H1 (cell line): ENCODE measurements at regions of chr20 and their contacts with region 1.

Region 1: DNA sequence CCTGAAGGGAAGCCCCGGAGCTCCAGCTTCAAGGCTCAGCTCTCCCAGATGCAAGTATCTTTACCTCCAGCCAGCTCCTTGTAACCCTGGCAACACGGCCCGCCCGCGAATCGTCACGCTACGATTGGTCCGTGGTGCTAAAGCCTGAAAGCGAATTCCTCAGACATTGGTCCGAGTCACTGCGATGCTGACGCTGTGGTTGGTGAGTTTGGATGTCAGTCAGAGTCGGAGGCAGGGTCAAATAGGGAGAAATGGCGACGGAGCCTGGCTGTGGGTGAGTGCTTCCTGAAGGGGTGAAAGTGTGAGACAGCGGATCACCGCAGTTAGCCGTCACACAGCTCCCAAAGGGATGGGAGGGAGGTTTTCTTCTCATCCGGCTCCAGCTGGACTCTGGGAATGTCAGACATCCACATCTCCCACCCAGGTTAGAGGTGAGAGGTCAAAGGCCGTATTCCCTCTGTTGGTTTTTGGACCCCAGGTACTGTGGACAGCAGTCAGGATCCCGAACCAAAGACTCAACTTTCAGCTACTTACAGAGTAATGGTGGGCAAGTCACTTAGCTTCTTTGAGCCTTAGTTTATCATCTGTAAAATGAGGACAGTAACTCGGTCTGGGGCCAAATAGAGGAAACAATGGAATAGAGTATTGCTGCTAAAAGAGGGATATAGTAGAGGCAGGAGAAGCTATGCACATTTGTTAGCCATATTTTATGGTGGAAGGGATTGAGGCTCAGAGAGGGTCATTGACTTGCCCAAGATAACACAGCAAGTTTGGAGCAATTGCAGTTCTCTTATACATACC is at the start of gene ZSWIM1:
- DNase-seq: peak; percentile 98 to 99
- H3K4me3 ChIP-seq: peak within 1 kb of the TSS; percentile 80 to 99 (median 90)
- H3K27ac ChIP-seq: peak within 1 kb of the TSS; percentile 69
- H3K4me1 ChIP-seq: no peaks in the 10 kb centered on the region
- H3K27me3 ChIP-seq: no peaks in the 10 kb centered on the region
- CTCF ChIP-seq: no peak
- EP300 ChIP-seq: no peak
- POLR2A ChIP-seq: peak; percentile 61 to 88
- RAD21 ChIP-seq: no peak
- total RNA-seq, gene ZSWIM1: 15.6 and 16.7 TPM in 2 replicates

Region 2: DNA sequence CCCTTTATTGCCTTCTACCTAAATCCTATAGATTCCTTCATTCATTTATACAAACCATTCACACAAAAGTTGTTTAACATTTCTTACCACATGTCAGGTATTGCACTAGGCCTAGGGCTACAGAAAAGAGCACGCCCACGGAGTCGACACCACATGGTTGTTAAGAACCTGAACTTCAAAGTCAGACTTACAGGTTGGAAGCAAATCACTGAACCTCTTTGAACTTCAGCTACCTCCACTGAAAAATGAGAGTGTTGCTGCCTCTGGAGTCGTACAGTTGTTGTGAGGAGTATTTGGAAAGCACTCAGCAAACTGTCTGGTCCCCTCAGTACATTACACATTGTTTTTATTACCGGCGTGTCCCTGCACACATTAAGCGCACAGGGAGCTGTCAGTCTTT is 623.5 kb before region 1 on chr20:
- CTCF ChIA-PET with region 1: no interaction called
- POLR2A ChIA-PET with region 1: no interaction called
- DNase-seq: no peak
- H3K4me3 ChIP-seq: no peak overlapping the region
- H3K27ac ChIP-seq: no peak overlapping the region
- H3K4me1 ChIP-seq: peaks cover 0 to 6% (median 3%) of the 10 kb centered on the region in 4 experiments; a peak in 5 of 7 replicates
- H3K27me3 ChIP-seq: no peaks in the 10 kb centered on the region; a peak in 1 of 7 replicates
- CTCF ChIP-seq: no peak
- EP300 ChIP-seq: no peak
- POLR2A ChIP-seq: no peak
- RAD21 ChIP-seq: no peak

Region 3: DNA sequence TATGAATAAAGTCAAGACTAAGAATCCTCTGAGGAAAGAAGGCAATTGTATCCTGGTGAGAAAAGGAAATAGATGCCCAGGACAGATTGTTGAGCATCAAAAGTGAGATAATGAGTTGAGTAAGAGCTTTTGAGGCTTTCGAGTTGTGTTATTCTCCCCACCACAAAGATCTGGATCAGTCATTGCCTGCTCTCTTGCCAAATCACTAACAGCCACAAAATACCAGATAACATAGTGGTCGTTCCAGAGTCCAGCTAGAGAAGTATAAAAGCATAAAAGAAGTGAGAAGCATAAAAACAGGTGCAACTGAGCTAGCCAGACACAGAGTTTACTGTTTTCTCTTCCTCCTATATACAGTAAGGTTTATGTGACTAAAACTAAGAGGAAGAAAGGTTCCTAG is 154.1 kb before region 1 on chr20:
- CTCF ChIA-PET with region 1: no interaction called
- POLR2A ChIA-PET with region 1: no interaction called
- DNase-seq: no peak
- H3K4me3 ChIP-seq: no peak overlapping the region
- H3K27ac ChIP-seq: no peak overlapping the region
- H3K4me1 ChIP-seq: no peaks in the 10 kb centered on the region
- H3K27me3 ChIP-seq: no peaks in the 10 kb centered on the region
- CTCF ChIP-seq: no peak
- EP300 ChIP-seq: no peak
- POLR2A ChIP-seq: no peak
- RAD21 ChIP-seq: no peak

Region 4: DNA sequence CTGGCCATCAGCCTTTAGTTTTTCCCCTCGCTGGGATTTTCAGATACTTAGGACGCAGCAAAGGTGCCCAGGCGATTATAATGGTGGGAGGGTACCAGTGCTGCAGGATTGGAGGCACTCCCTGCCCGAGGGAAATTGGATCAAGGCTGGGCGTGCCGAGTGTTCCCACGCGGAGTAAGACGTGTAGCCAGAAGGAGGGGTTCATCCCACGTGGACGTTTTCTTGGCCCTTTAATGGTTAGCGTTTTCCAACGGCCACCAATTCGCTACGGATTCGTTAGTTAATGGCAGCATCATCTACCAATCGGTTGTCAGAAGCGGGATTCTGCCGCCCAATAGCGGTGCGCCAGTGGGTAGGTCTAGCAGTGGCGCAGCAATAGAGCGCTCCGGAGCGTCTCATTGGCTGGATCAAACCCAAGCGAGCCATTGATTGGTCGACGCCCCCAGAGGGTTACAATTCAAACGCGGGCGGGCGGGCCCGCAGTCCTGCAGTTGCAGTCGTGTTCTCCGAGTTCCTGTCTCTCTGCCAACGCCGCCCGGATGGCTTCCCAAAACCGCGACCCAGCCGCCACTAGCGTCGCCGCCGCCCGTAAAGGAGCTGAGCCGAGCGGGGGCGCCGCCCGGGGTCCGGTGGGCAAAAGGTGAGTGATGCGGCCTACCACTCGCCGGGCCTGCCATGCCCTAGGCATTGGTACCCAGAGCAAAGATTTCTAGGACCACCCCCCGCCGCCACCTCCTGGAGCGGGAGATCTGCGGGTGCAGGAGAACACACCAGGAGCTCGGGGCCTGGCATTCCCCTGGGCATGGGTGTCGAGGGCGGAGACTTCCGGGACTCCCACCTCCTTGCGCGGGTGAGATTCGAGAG is 68.8 kb before region 1 on chr20 and contains the start of gene UBE2C:
- CTCF ChIA-PET with region 1: no interaction called
- POLR2A ChIA-PET with region 1: interaction called, 15 read pairs
- DNase-seq: peak; percentile 96 to 99
- H3K4me3 ChIP-seq: peak within 1 kb of the TSS; percentile 91 to 100 (median 98)
- H3K27ac ChIP-seq: peak within 1 kb of the TSS; percentile 74; the same call in 1 of the 2 replicates
- H3K4me1 ChIP-seq: peaks cover 0 to 4% (median 2%) of the 10 kb centered on the region in 4 experiments; a peak in 3 of 7 replicates
- H3K27me3 ChIP-seq: no peaks in the 10 kb centered on the region
- CTCF ChIP-seq: no peak
- EP300 ChIP-seq: no peak
- POLR2A ChIP-seq: peak; percentile 47 to 64; a peak in 2 of 3 replicates
- RAD21 ChIP-seq: no peak
- total RNA-seq, gene UBE2C: 243 and 255 TPM in 2 replicates

Region 5: GRCh38 chr20:45848969-45849582 is 32.1 kb before region 1 on chr20:
- CTCF ChIA-PET with region 1: no interaction called
- POLR2A ChIA-PET with region 1: interaction called, 10 read pairs
- DNase-seq: no peak
- H3K4me3 ChIP-seq: no peak overlapping the region
- H3K27ac ChIP-seq: no peak overlapping the region
- H3K4me1 ChIP-seq: peaks cover 3 to 6% (median 4%) of the 10 kb centered on the region in 4 experiments; a peak in 5 of 7 replicates
- H3K27me3 ChIP-seq: no peaks in the 10 kb centered on the region
- CTCF ChIP-seq: no peak
- EP300 ChIP-seq: no peak
- POLR2A ChIP-seq: no peak
- RAD21 ChIP-seq: no peak

Region 6: DNA sequence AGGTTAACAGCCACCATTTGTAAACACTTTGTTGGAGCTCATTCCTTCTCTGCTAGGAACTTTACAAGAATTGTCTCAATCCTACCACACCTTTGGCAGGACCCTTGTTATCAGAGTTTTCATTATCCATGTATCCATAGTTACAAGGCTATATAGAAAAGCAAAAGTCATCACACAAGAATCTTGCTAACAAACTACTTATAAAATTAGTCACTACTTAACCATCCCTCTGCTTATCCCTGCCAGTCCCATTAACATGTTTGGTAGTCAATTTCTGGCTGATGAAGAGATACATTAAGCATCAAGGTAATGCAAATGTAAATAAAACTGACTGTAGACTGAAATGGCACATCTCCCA is 13.4 kb before region 1 on chr20:
- CTCF ChIA-PET with region 1: no interaction called
- POLR2A ChIA-PET with region 1: interaction called, 39 read pairs
- DNase-seq: no peak
- H3K4me3 ChIP-seq: no peak overlapping the region
- H3K27ac ChIP-seq: no peak overlapping the region
- H3K4me1 ChIP-seq: no peaks in the 10 kb centered on the region
- H3K27me3 ChIP-seq: no peaks in the 10 kb centered on the region
- CTCF ChIP-seq: no peak
- EP300 ChIP-seq: no peak
- POLR2A ChIP-seq: no peak
- RAD21 ChIP-seq: no peak

Region 7: GRCh38 chr20:45910670-45911485 is 29.7 kb after region 1 on chr20:
- CTCF ChIA-PET with region 1: interaction called, 4 read pairs
- POLR2A ChIA-PET with region 1: interaction called, 19 read pairs
- DNase-seq: peak; percentile 99 to 100
- H3K4me3 ChIP-seq: peak overlapping the region; percentile 52 to 81 (median 70)
- H3K27ac ChIP-seq: peak overlapping the region; percentile 58; the same call in 1 of the 2 replicates
- H3K4me1 ChIP-seq: peaks cover 0 to 2% (median 0%) of the 10 kb centered on the region in 4 experiments; a peak in 3 of 7 replicates
- H3K27me3 ChIP-seq: no peaks in the 10 kb centered on the region
- CTCF ChIP-seq: no peak
- EP300 ChIP-seq: no peak
- POLR2A ChIP-seq: peak; percentile 59 to 68; a peak in 2 of 3 replicates
- RAD21 ChIP-seq: no peak

Region 8: GRCh38 chr20:46004889-46005473 is 123.8 kb after region 1 on chr20:
- CTCF ChIA-PET with region 1: no interaction called
- POLR2A ChIA-PET with region 1: no interaction called
- DNase-seq: no peak
- H3K4me3 ChIP-seq: peak overlapping the region in 1 of 4 experiments; percentile 4; a peak in 2 of 8 replicates
- H3K27ac ChIP-seq: no peak overlapping the region
- H3K4me1 ChIP-seq: peaks cover 12 to 34% (median 17%) of the 10 kb centered on the region in 4 experiments
- H3K27me3 ChIP-seq: no peaks in the 10 kb centered on the region
- CTCF ChIP-seq: no peak
- EP300 ChIP-seq: no peak
- POLR2A ChIP-seq: no peak
- RAD21 ChIP-seq: no peak